Mammary epithelial cell (primary cell): ENCODE measurements at regions of chr2 and their contacts with region 1.

Region 1: GRCh38 chr2:130797493-130798435 is 39.0 kb upstream of the ARHGEF4 start:
- DNase-seq: peak; percentile 83
- H3K4me3 ChIP-seq: peak overlapping the region; percentile 60 to 76 (median 73)
- H3K27ac ChIP-seq: peak overlapping the region; percentile 63
- H3K4me1 ChIP-seq: peaks cover 18% of the 10 kb centered on the region
- H3K27me3 ChIP-seq: no peaks in the 10 kb centered on the region
- CTCF ChIP-seq: peak; percentile 78 to 95

Region 2: DNA sequence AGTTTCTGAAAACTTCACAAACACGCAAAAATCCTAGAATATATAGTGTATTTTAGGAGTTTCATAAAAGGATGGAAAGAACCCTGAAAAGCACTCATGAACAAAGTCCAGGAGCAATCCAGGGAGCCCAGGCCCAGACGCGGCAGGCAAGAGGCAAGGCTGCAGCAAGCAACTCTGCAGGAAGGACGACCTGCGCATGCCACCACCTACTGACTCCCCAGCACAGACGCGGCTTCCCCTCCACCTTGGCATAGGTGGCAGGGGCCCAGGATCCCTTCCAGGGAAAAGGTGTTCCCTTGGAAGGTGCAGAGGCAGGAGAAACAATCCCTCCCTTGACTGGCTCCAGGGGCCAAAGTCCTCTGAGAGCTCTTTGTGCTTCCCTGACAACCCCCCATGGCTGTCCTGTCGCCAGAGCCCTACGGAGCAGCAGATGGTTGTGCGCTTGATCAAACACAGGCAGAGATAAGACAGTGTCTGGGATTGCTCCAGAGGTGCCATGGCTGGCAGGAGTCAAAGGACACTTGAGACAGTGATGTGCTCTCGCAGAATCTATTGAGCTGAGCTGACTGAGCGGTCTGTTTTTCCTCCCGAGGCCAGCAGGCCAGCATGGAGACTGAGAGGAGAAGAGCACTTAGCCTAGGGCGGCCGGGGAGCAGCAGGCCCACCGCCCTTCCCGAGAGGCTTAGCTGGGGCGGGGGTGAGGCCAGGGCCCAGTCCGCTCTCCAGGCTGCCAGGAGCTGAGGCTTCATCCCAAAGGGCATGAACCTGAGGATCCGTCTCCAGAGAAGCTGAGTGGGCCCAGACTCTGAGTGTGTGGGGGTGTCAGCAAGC is 53.3 kb before region 1 on chr2:
- CTCF ChIA-PET with region 1: no interaction called
- dilution Hi-C with region 1: no loop called
- in situ Hi-C with region 1: no loop called
- intact Hi-C with region 1: no loop called
- DNase-seq: no peak
- H3K4me3 ChIP-seq: no peak overlapping the region
- H3K27ac ChIP-seq: no peak overlapping the region
- H3K4me1 ChIP-seq: no peaks in the 10 kb centered on the region
- H3K27me3 ChIP-seq: peaks cover 2% of the 10 kb centered on the region
- CTCF ChIP-seq: no peak

Region 3: GRCh38 chr2:130836501-130837174 is 38.9 kb after region 1 on chr2 and contains the start of gene ARHGEF4:
- CTCF ChIA-PET with region 1: no interaction called
- dilution Hi-C with region 1: no loop called
- in situ Hi-C with region 1: no loop called
- intact Hi-C with region 1: loop called (anchors 1 kb)
- DNase-seq: peak; percentile 59
- H3K4me3 ChIP-seq: peak within 1 kb of the TSS; percentile 66 to 82 (median 73)
- H3K27ac ChIP-seq: peak within 1 kb of the TSS; percentile 40
- H3K4me1 ChIP-seq: peaks cover 6% of the 10 kb centered on the region
- H3K27me3 ChIP-seq: no peaks in the 10 kb centered on the region
- CTCF ChIP-seq: no peak
- total RNA-seq, gene ARHGEF4: 48.8 to 70.3 TPM

Region 4: GRCh38 chr2:130864830-130865800 is 67.4 kb after region 1 on chr2:
- CTCF ChIA-PET with region 1: interaction called, 4 read pairs
- dilution Hi-C with region 1: loop called (anchors 5 kb)
- in situ Hi-C with region 1: loop called (anchors 5 kb)
- intact Hi-C with region 1: no loop called
- DNase-seq: peak; percentile 93
- H3K4me3 ChIP-seq: no peak overlapping the region
- H3K27ac ChIP-seq: no peak overlapping the region
- H3K4me1 ChIP-seq: peaks cover 15% of the 10 kb centered on the region
- H3K27me3 ChIP-seq: no peaks in the 10 kb centered on the region
- CTCF ChIP-seq: no peak

Region 5: DNA sequence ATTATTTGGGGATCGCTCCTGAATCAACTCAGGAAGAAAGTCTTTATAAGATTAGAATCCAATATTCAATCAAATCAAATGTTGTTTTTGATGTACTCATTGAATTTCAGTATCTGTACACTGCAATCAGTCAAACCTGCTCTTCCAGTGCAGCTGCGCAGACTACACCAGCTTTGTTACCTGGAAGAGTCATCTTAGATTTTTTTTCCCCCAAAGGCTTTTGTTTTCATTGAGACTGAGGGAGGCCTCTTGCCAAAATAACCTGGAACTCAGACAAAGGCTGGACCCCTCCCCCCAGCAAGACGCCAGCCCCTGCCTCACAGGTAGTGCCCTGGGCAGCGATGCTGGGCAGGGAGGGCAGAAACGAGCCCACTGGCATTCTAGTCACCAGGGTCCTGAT is 113.7 kb after region 1 on chr2:
- CTCF ChIA-PET with region 1: no interaction called
- dilution Hi-C with region 1: loop called (anchors 5 kb)
- in situ Hi-C with region 1: no loop called
- intact Hi-C with region 1: no loop called
- DNase-seq: peak; percentile 58
- H3K4me3 ChIP-seq: peak overlapping the region in 1 of 3 experiments; percentile 44
- H3K27ac ChIP-seq: peak overlapping the region; percentile 48
- H3K4me1 ChIP-seq: peaks cover 49% of the 10 kb centered on the region
- H3K27me3 ChIP-seq: no peaks in the 10 kb centered on the region
- CTCF ChIP-seq: no peak

Region 6: GRCh38 chr2:131016826-131017741 is 219.3 kb after region 1 on chr2:
- CTCF ChIA-PET with region 1: interaction called, 3 read pairs
- dilution Hi-C with region 1: no loop called
- in situ Hi-C with region 1: no loop called
- intact Hi-C with region 1: loop called (anchors 1 kb)
- DNase-seq: peak; percentile 98
- H3K4me3 ChIP-seq: peak overlapping the region; percentile 25 to 46 (median 40)
- H3K27ac ChIP-seq: peak overlapping the region; percentile 94
- H3K4me1 ChIP-seq: peaks cover 42% of the 10 kb centered on the region
- H3K27me3 ChIP-seq: no peaks in the 10 kb centered on the region
- CTCF ChIP-seq: peak in 1 of 2 donors; percentile 5

Region 7: GRCh38 chr2:131076707-131077106 is 278.9 kb after region 1 on chr2:
- CTCF ChIA-PET with region 1: no interaction called
- dilution Hi-C with region 1: loop called (anchors 5 kb)
- in situ Hi-C with region 1: loop called in 1 of 2 experiments (anchors 25 kb)
- intact Hi-C with region 1: loop called (anchors 1 kb)
- DNase-seq: no peak
- H3K4me3 ChIP-seq: no peak overlapping the region
- H3K27ac ChIP-seq: no peak overlapping the region
- H3K4me1 ChIP-seq: peaks cover 8% of the 10 kb centered on the region
- H3K27me3 ChIP-seq: no peaks in the 10 kb centered on the region
- CTCF ChIP-seq: no peak

Region 8: DNA sequence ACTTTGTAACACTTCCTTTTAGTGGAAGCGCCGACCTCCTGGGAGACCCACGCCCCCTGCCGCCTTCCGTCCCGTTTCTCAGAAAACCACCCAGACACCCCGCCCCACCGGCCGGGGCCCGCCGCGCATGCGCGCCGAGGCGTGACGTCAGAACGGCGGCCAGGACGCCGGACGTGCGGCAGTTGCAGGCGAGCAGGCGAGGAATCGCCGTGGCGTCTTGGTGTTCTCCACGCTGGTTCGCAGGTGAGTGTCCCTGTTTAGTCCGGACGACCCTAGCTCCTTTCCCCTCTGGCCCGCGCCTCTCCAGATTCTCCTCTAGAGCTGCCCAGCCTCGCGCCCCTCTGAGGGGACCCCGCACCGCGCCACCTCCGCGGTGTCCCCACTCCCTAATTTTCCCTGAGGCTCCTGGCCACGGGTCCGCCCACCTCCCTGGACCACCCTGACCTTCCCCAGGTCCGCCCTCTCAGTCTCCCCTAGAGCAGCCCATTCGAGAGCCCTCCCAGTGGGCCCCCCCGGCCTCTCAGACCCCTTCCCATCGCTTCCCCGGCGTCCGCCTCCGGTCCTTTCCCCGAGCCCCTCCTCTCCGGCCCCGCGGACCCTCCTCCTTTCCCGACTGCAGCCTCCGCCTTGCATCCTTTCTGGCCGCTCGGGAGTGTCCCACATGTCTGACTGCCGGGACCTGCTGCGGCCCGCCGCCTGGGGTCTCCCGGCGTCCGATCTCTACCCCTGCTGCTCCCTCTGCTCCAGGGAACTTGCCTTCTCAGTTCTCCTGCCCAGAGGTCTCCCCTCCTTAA is 307.6 kb after region 1 on chr2 and contains the start of gene PLEKHB2:
- CTCF ChIA-PET with region 1: no interaction called
- dilution Hi-C with region 1: no loop called
- in situ Hi-C with region 1: no loop called
- intact Hi-C with region 1: loop called (anchors 2 kb)
- DNase-seq: peak; percentile 83
- H3K4me3 ChIP-seq: peak within 1 kb of the TSS; percentile 95 to 99 (median 99)
- H3K27ac ChIP-seq: peak within 1 kb of the TSS; percentile 72
- H3K4me1 ChIP-seq: peaks cover 23% of the 10 kb centered on the region
- H3K27me3 ChIP-seq: no peaks in the 10 kb centered on the region
- CTCF ChIP-seq: peak in 1 of 2 donors; percentile 32
- total RNA-seq, gene PLEKHB2: 72.1 to 130 TPM